ENCODE measurements at regions of chr3 and their contacts with region 1.

Region 1: GRCh38 chr3:120417272-120417911 is 33.4 kb downstream of the FSTL1 start:
- DNase-seq: peak; percentile 84 to 97
- H3K4me3 ChIP-seq: peak overlapping the region; percentile 38 to 53
- H3K27ac ChIP-seq: peak overlapping the region; percentile 56 to 80
- H3K4me1 ChIP-seq: peaks cover 42 to 52% of the 10 kb centered on the region in 2 donors
- H3K27me3 ChIP-seq: no peaks in the 10 kb centered on the region
- CTCF ChIP-seq: peak; percentile 69 to 88 (median 78)

Region 2: GRCh38 chr3:119702530-119703157 is 714.7 kb before region 1 on chr3 and contains the start of gene CFAP91:
- intact Hi-C with region 1: loop called (anchors 5 kb)
- DNase-seq: peak; percentile 93 to 99
- H3K4me3 ChIP-seq: peak within 1 kb of the TSS; percentile 54 to 73
- H3K27ac ChIP-seq: peak within 1 kb of the TSS; percentile 65
- H3K4me1 ChIP-seq: peaks cover 0 to 5% of the 10 kb centered on the region in 2 donors
- H3K27me3 ChIP-seq: no peaks in the 10 kb centered on the region
- CTCF ChIP-seq: no peak
- total RNA-seq, gene CFAP91: 3.5 TPM

Region 3: GRCh38 chr3:119819806-119820205 is 597.6 kb before region 1 on chr3:
- intact Hi-C with region 1: no loop called
- DNase-seq: no peak
- H3K4me3 ChIP-seq: no peak overlapping the region
- H3K27ac ChIP-seq: no peak overlapping the region
- H3K4me1 ChIP-seq: no peaks in the 10 kb centered on the region
- H3K27me3 ChIP-seq: no peaks in the 10 kb centered on the region
- CTCF ChIP-seq: no peak

Region 4: GRCh38 chr3:120348981-120349818 is 68.2 kb before region 1 on chr3 and contains the start of gene LRRC58:
- intact Hi-C with region 1: loop called (anchors 2 kb)
- DNase-seq: peak; percentile 42 to 94
- H3K4me3 ChIP-seq: peak within 1 kb of the TSS; percentile 89 to 96
- H3K27ac ChIP-seq: peak within 1 kb of the TSS; percentile 92 to 94
- H3K4me1 ChIP-seq: peaks cover 0 to 14% of the 10 kb centered on the region in 2 donors
- H3K27me3 ChIP-seq: no peaks in the 10 kb centered on the region
- CTCF ChIP-seq: peak in 1 of 3 experiments; percentile 23
- total RNA-seq, gene LRRC58: 14.7 TPM

Region 5: GRCh38 chr3:120450600-120451271 is 33.3 kb after region 1 on chr3 and contains the start of gene FSTL1:
- intact Hi-C with region 1: loop called (anchors 1 kb)
- DNase-seq: peak in 1 of 2 donors; percentile 77
- H3K4me3 ChIP-seq: peak within 1 kb of the TSS; percentile 87 to 94
- H3K27ac ChIP-seq: peak within 1 kb of the TSS; percentile 98 to 99
- H3K4me1 ChIP-seq: peaks cover 16 to 24% of the 10 kb centered on the region in 2 donors
- H3K27me3 ChIP-seq: no peaks in the 10 kb centered on the region
- CTCF ChIP-seq: no peak
- total RNA-seq, gene FSTL1: 790 TPM

Region 6: GRCh38 chr3:120558771-120559241 is 141.4 kb after region 1 on chr3:
- intact Hi-C with region 1: loop called (anchors 1 kb)
- DNase-seq: peak; percentile 62 to 93
- H3K4me3 ChIP-seq: peak overlapping the region; percentile 42 to 66
- H3K27ac ChIP-seq: peak overlapping the region; percentile 67 to 89
- H3K4me1 ChIP-seq: peaks cover 15 to 25% of the 10 kb centered on the region in 2 donors
- H3K27me3 ChIP-seq: no peaks in the 10 kb centered on the region
- CTCF ChIP-seq: peak; percentile 92 to 98 (median 97)